Activated B cell treated with CpG ODN at 0.5 μM for 24 hours (primary cell): ENCODE measurements at regions of chr12 and their contacts with region 1.

Region 1: GRCh38 chr12:46268590-46269558 is at the start of gene SLC38A1:
- DNase-seq: peak; percentile 77
- ATAC-seq: peak; percentile 71
- H3K4me3 Mint-ChIP-seq: no peak within 1 kb of the TSS
- H3K27ac Mint-ChIP-seq: no peak within 1 kb of the TSS
- H3K4me1 Mint-ChIP-seq: peaks cover 22% of the 10 kb centered on the region
- H3K27me3 Mint-ChIP-seq: no peaks in the 10 kb centered on the region
- CTCF ChIP-seq: no peak
- total RNA-seq, gene SLC38A1: 283 and 314 TPM in 2 replicates

Region 2: DNA sequence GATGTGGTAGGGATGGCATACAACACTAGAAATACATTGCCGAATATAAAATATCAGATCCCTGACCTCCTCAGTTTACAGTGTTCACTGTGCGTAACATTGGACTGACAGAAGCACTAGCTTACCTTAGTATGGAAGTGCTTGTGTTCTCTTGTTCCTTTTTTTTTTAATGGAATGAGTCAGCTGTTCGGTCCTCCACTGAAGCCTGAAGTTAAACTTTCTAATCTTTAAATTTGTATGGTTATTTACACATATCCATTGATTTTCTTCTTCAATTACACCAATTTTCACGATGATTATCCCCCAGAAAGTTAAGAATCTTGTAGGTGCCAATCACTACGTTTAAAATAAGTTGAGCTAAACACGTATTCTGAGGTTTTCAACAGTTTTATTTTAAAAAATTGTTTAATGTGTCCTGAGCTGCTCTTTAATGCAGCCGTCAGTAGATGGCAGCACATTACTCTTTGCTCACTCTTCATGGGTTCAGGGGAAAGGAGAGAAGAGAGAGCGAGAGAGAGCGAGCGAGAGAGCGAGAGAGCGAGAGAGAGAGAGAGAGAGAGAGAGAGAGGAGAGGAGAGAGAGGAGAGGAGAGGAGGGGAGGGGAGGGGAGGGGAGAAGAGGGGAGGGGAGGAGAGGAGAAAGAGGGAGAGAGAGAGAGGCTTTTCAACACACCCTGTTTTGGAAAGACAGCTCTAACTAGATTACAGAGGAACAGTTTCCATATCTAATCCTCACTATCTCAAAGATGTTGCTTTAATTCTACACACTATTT is 143.8 kb before region 1 on chr12:
- CTCF ChIA-PET with region 1: interaction called, 6 read pairs
- POLR2A ChIA-PET with region 1: interaction called, 12 read pairs
- intact Hi-C with region 1: no loop called
- DNase-seq: no peak
- ATAC-seq: peak; percentile 93
- H3K4me3 Mint-ChIP-seq: peak overlapping the region; percentile 67
- H3K27ac Mint-ChIP-seq: peak overlapping the region; percentile 72
- H3K4me1 Mint-ChIP-seq: peaks cover 5% of the 10 kb centered on the region
- H3K27me3 Mint-ChIP-seq: peaks cover 5% of the 10 kb centered on the region
- CTCF ChIP-seq: peak; percentile 75

Region 3: GRCh38 chr12:46179683-46180452 is 89.0 kb before region 1 on chr12:
- CTCF ChIA-PET with region 1: no interaction called
- POLR2A ChIA-PET with region 1: interaction called, 39 read pairs
- intact Hi-C with region 1: no loop called
- DNase-seq: no peak
- ATAC-seq: peak; percentile 60
- H3K4me3 Mint-ChIP-seq: peak overlapping the region; percentile 69
- H3K27ac Mint-ChIP-seq: peak overlapping the region; percentile 82
- H3K4me1 Mint-ChIP-seq: peaks cover 98% of the 10 kb centered on the region
- H3K27me3 Mint-ChIP-seq: no peaks in the 10 kb centered on the region
- CTCF ChIP-seq: no peak

Region 4: GRCh38 chr12:46217541-46218321 is 51.1 kb before region 1 on chr12:
- CTCF ChIA-PET with region 1: interaction called, 6 read pairs
- POLR2A ChIA-PET with region 1: interaction called, 154 read pairs
- intact Hi-C with region 1: loop called (anchors 1 kb)
- DNase-seq: no peak
- ATAC-seq: peak; percentile 63
- H3K4me3 Mint-ChIP-seq: peak overlapping the region; percentile 49
- H3K27ac Mint-ChIP-seq: peak overlapping the region; percentile 98
- H3K4me1 Mint-ChIP-seq: peaks cover 97% of the 10 kb centered on the region
- H3K27me3 Mint-ChIP-seq: no peaks in the 10 kb centered on the region
- CTCF ChIP-seq: no peak

Region 5: DNA sequence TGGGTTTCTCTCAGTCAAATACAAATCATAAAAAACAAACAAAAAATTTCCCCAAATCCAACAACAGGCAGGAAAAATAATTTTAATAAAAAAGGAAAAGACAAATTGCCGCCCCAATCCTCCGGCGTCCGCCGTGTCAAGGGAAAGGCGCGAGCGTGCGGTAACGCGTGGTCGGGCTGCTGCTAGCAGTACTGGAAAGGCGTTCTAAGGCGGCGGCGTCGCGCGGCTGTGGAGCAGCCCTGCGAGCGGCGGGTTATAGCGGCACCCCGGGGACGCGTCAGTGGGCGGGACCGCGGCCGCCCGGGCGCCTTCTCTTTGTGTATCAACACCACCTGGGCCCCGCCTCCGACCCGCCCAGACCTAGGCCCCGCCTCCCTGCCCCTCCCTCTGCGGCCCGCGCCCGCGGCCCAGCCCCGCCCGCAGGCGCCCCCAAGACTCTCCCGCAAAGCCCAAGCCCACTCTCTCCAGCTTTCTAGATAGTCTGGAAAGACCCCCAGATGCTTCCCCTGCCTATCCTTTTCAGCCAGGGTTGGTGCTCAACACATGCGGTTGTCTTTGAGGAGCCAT is 103.8 kb after region 1 on chr12 and contains the start of gene SLC38A2:
- CTCF ChIA-PET with region 1: no interaction called
- POLR2A ChIA-PET with region 1: interaction called, 26 read pairs
- intact Hi-C with region 1: loop called (anchors 1 kb)
- DNase-seq: peak; percentile 97
- ATAC-seq: peak; percentile 88
- H3K4me3 Mint-ChIP-seq: peak within 1 kb of the TSS; percentile 96
- H3K27ac Mint-ChIP-seq: peak within 1 kb of the TSS; percentile 99
- H3K4me1 Mint-ChIP-seq: peaks cover 46% of the 10 kb centered on the region
- H3K27me3 Mint-ChIP-seq: no peaks in the 10 kb centered on the region
- CTCF ChIP-seq: no peak
- total RNA-seq, gene SLC38A2: 231 and 247 TPM in 2 replicates

Region 6: GRCh38 chr12:46661110-46661845 is 392.4 kb after region 1 on chr12:
- CTCF ChIA-PET with region 1: interaction called, 9 read pairs
- POLR2A ChIA-PET with region 1: no interaction called
- intact Hi-C with region 1: loop called (anchors 2 kb)
- DNase-seq: no peak
- ATAC-seq: peak; percentile 94
- H3K4me3 Mint-ChIP-seq: peak overlapping the region; percentile 3
- H3K27ac Mint-ChIP-seq: no peak overlapping the region
- H3K4me1 Mint-ChIP-seq: peaks cover 31% of the 10 kb centered on the region
- H3K27me3 Mint-ChIP-seq: no peaks in the 10 kb centered on the region
- CTCF ChIP-seq: no peak